GM10248 (cell line): ENCODE measurements at regions of chr6 and their contacts with region 1.

Region 1: DNA sequence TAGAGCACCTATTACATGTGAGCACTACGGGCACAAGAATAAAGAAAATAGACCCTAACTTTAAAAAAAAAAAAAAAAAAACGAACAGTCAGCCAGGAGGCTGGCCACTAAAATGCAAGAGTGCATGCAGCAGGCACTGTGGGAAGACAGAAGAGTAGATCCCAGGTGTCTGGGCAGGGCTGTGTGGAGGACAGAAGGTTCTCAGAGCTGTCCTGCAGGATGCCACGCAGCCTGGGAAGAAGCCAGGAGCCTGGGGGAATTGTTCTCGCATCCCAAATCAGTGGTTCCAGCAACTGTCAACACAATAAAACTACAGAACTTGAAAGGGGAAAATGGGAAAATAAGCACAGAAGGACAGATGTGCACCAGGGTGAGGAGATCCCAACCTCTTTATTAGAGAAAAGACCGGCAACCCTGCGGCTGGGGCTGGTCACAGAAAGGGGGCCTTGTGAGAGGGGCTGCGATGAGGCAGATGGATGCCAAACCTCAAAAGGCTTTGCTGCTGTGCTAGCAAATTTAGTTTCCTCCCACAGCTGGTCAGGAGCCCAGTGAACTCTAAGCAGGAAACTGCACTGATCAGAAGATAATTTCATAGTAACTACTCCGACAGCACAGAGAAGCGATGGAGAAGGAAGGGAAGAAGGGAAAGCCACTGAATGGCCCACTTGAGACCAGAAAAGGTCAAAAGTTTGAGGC is 30.9 kb downstream of the MAP3K5 start:
- DNase-seq: no peak
- CTCF ChIP-seq: no peak

Region 2: GRCh38 chr6:135586841-135587240 is 1174.5 kb before region 1 on chr6:
- CTCF ChIA-PET with region 1: no interaction called
- POLR2A ChIA-PET with region 1: interaction called, 11 read pairs
- DNase-seq: no peak
- CTCF ChIP-seq: no peak

Region 3: DNA sequence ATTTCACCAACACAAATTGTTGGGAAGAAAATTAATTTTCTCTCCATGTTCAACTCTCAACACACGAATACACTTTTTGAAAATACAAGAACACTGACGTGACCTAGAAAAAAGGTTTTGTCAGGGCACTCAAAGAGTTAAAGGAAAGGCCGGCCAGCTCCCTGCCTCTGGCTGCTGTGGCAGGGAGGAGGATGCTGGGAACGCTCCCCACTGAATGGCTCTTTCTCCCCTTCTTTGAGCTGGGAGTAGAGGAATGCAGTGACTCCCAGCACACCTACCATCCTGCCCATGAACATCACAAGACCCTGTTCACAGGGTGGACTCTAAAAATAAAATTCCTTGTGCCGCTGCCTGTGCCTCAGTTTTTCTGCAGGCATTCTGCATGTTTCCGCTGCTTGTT is 16.1 kb before region 1 on chr6:
- CTCF ChIA-PET with region 1: interaction called, 11 read pairs
- POLR2A ChIA-PET with region 1: interaction called, 4 read pairs
- DNase-seq: no peak
- CTCF ChIP-seq: no peak

Region 4: GRCh38 chr6:136772685-136773472 is 11.5 kb after region 1 on chr6:
- CTCF ChIA-PET with region 1: interaction called, 16 read pairs
- POLR2A ChIA-PET with region 1: interaction called, 6 read pairs
- DNase-seq: peak; percentile 45
- CTCF ChIP-seq: no peak

Region 5: GRCh38 chr6:136873748-136874147 is 112.4 kb after region 1 on chr6:
- CTCF ChIA-PET with region 1: no interaction called
- POLR2A ChIA-PET with region 1: no interaction called
- DNase-seq: no peak
- CTCF ChIP-seq: no peak

Region 6: DNA sequence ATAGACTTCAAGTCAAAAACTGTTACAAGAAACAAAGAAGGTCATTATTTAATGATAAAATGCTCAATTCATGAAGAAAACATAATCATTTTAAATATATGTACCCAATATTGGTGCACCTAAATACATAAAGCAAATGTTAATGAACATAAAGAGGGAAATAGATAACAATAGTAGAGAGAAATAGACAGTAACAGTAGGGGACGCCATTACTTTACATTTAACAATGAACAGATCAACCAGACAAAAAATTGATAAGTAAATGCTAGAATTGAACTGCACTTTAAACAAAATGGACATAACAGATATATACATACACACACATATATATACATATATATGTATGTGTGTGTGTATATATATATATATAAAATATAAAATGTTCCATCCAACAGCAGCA is 374.7 kb after region 1 on chr6:
- CTCF ChIA-PET with region 1: no interaction called
- POLR2A ChIA-PET with region 1: no interaction called
- DNase-seq: no peak
- CTCF ChIP-seq: no peak